ENCODE measurements at regions of chr22 and their contacts with region 1.

Region 1: DNA sequence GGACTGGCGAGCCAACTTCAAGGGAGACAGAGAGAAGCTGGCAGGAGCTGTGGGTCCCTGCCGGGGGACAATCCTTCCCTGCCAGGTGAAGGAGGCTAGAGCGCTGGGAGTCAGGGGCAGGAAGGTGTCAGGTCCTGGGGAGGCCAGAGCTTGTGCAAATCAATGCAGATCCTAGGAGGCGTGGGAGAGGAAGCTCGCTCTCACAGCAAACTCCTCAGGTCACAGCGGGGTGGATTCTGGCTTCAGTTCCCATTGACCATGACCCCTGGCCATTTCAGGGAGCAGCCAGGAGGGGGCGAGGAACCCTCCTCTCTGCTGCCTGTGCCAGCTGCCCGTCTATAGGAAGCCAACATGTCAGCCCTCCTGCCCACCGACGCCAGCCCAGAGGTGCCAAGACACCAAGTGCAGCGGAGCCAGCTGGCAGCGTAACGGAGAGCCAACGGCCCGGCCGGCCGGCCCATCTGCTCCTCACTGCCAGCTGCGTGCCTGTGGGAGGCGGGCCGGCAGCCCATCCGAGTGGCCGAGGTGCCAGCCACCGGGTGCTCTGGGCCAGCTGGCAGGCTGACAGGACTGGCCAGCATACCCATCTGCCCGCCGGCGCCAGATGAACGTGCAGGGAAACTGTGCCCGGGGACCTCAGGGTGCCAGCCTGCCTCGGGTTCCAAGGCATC is 374.8 kb downstream of the MIAT start:
- DNase-seq: peak in 5 of 6 donors; percentile 37 to 85 (median 64)
- ATAC-seq: peak; percentile 62 to 84 (median 78)
- H3K4me3 ChIP-seq: no peak overlapping the region
- H3K27ac ChIP-seq: no peak overlapping the region
- H3K4me1 ChIP-seq: no peaks in the 10 kb centered on the region
- H3K27me3 ChIP-seq: no peaks in the 10 kb centered on the region
- CTCF ChIP-seq: no peak

Region 2: DNA sequence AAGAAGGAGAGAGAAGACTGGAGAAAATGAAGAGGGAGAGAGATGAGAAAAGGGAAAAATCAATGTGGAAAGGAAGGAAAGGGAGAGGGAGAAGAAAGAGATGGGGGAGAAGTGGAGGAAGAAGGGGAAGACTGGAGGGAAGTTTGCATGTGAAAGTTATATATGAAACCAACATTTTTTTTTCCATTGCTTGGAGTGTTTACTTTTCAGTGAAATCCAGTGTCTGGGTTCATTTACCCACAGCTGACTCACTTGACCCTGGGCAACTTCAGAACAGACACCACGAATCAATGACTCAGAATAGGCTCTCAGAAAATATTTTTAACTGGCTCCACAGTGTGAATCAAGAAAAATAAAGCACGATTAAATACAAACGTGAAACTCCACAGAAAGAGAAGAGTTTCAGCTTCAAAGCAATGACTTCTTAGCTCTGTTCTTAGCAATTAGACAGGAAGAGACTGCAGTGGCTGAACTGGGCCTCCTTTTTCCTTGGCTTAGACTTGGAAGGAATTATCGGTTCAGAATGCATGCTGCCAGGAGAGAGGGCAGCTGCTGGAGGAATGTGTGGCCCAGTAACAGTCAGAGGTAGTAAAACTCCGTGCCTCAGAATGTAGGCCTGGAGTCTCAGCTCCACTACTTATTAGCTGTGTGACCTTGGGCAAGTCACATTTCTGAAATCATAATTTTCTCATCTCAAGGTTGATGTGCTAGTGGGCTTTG is 137.3 kb before region 1 on chr22:
- intact Hi-C with region 1: no loop called
- DNase-seq: peak in 3 of 6 donors; percentile 39 to 54 (median 41)
- ATAC-seq: peak; percentile 91 to 94 (median 92)
- H3K4me3 ChIP-seq: no peak overlapping the region
- H3K27ac ChIP-seq: peak overlapping the region in 3 of 4 donors; percentile 74 to 94 (median 82)
- H3K4me1 ChIP-seq: peaks cover 0 to 34% (median 20%) of the 10 kb centered on the region in 3 donors
- H3K27me3 ChIP-seq: peaks cover 0 to 5% (median 0%) of the 10 kb centered on the region in 4 donors
- CTCF ChIP-seq: no peak

Region 3: DNA sequence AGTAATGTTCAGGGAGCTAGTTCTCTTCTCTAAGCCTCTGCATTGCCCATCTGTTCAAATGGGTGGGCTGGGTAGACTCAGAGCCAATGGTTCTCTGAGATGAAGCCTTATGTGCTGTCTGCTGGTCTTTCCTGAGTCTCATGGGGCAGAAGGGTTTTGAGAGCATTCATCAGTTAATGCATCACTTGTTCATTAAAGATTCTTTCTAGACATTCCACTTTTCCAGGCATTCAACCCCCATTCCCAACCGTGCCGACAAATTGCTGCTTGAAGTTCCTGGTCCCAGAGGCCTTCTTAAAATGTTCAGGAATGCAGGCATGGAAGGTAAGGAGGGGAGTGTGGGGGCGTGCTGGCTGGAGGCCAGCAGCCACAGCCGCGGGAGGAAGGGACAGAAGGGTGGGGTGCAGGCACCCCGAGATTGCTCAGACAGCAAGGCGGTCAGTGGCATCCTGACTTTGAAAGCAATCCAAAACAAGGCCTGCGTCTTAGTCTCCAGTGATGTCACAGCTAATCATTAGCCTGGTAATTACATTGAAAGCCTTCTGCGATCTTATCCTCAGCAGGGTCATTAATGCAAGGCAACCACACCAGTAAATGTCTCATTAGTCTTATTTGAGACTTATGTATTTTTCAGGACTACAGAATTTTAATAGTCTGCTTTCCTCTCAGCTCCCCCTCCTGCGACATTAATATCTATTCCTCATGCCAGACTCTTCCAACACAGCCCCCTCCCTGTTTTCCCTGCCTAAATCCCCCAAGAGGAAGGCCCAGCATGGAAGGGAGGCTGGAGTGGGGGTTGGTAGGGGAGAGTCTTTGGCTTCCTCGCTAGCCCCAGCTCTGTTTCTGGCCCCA is 46.1 kb before region 1 on chr22:
- intact Hi-C with region 1: no loop called
- DNase-seq: no peak
- ATAC-seq: no peak
- H3K4me3 ChIP-seq: no peak overlapping the region
- H3K27ac ChIP-seq: no peak overlapping the region
- H3K4me1 ChIP-seq: no peaks in the 10 kb centered on the region
- H3K27me3 ChIP-seq: no peaks in the 10 kb centered on the region
- CTCF ChIP-seq: no peak

Region 4: GRCh38 chr22:27080863-27081262 is 48.6 kb after region 1 on chr22:
- intact Hi-C with region 1: loop called in 1 of 3 experiments (anchors 5 kb)
- DNase-seq: no peak
- ATAC-seq: no peak
- H3K4me3 ChIP-seq: no peak overlapping the region
- H3K27ac ChIP-seq: no peak overlapping the region
- H3K4me1 ChIP-seq: no peaks in the 10 kb centered on the region
- H3K27me3 ChIP-seq: peaks cover 0 to 4% (median 0%) of the 10 kb centered on the region in 4 donors
- CTCF ChIP-seq: no peak